ENCODE measurements at regions of chr15 and their contacts with region 1.

Region 1: DNA sequence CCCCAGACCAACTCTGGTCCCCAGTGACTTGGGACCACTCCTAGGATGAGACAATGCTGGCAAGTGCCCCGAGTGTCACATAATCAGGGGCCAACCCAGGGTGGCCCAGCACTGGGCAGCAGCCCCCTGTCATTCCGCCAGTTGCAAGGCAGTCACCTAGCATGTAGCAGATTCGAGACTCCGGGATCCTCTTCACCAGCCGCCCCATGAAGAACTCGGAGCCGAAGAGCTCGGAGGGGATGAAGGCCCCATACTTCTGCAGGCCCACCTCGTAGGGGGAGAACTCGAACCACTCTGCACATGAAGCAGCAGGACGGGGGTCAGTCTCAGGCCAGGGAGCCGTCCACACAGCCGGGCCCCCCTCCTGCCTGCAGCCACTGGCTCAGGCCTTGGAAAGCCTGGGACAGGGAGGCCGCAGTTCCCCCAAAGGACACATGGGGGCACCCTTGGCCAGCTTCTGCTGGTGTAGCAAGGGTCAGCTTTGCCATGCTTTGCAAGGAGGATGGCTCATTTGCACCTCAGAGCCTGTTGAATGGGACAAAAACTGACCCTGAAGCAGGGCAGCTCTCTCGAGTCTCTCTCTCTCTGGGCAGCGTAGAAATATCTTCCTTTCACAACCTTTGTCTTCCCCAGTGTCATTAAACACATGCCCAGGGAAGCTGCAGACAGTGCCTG is 17.0 kb upstream of the EHD4 start:
- DNase-seq: peak; percentile 91
- H3K4me3 Mint-ChIP-seq: no peak overlapping the region
- H3K27ac Mint-ChIP-seq: no peak overlapping the region
- H3K4me1 Mint-ChIP-seq: no peaks in the 10 kb centered on the region
- H3K27me3 Mint-ChIP-seq: no peaks in the 10 kb centered on the region

Region 2: DNA sequence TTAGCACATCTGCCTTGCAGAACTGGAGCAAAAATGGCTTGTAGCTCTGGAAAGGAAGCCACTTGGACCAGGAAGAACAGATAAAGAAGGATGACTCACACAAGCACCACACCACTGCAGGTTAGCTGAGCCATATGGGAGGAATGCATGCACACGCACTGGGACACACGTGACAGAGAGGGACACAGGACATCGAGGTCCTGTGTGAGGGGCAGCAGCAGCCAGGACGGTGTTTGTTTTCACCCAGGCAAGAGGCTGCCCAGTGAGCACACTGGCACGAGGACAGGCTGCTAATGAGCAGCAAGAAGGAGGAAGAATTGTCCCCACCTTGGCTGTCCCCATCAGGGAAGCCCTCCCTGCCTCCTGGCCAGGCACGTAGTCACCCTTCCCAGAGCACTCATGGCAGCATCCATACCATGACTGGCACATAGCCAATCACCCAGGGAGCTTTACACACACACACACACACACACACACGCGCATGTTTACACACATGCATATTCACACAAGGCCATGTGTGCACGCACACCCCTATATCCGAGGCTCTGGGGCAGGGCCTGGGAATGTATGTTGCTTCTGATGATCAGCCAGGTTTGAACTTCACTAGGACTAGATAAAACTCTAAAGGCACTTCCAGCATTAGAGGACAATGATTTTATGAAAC is 71.5 kb before region 1 on chr15:
- CTCF ChIA-PET with region 1: no interaction called
- POLR2A ChIA-PET with region 1: no interaction called
- intact Hi-C with region 1: no loop called
- DNase-seq: no peak
- H3K4me3 Mint-ChIP-seq: no peak overlapping the region
- H3K27ac Mint-ChIP-seq: no peak overlapping the region
- H3K4me1 Mint-ChIP-seq: peaks cover 5% of the 10 kb centered on the region
- H3K27me3 Mint-ChIP-seq: no peaks in the 10 kb centered on the region

Region 3: DNA sequence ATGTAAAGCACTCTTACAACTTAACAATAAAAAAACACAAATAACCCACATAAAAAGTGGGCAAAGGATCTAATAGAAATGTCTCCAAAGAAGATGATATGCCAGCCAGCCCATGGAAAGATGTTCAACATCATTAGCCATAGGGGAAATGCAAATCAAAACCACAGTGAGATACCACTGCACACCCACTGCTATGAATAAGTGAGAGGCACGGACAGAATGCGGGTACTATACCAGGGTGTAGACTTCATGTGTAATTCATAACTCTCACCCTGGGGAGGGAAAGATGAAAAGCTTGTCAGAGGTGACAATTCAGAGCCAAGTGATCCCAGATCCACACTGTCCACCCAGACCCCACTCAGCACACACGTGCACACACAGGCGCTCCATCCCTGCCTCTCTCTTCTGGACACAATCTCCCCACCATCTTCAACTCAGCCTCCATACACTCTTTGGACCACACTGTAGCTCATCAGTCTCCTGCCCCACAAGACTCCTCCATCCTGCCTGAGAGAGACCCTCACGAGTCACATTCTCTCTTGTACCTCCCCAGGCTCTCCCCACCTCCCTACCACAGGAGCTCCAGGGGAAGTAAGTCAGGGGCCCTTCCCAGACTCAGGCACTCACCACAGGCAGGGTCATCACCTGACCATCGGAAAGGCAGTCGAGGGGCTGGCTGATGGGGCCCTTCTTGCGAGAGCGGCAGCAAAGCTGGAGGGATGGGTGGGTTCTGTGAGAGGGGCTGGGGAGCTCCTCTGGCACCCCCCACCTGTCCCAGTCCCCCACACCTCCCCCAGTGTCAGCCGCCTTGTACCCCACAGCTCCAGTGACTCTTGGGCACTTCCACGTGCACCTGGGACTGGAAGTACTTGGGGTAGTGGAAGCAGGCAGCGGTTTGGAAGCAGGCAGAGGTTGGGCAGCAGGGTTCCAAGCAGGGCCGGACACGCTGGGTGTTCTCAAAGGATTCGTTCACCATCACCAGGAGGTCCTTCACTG is 10.2 kb after region 1 on chr15:
- CTCF ChIA-PET with region 1: interaction called, 21 read pairs
- POLR2A ChIA-PET with region 1: no interaction called
- intact Hi-C with region 1: no loop called
- DNase-seq: peak; percentile 30
- H3K4me3 Mint-ChIP-seq: no peak overlapping the region
- H3K27ac Mint-ChIP-seq: no peak overlapping the region
- H3K4me1 Mint-ChIP-seq: peaks cover 6% of the 10 kb centered on the region
- H3K27me3 Mint-ChIP-seq: peaks cover 2% of the 10 kb centered on the region

Region 4: DNA sequence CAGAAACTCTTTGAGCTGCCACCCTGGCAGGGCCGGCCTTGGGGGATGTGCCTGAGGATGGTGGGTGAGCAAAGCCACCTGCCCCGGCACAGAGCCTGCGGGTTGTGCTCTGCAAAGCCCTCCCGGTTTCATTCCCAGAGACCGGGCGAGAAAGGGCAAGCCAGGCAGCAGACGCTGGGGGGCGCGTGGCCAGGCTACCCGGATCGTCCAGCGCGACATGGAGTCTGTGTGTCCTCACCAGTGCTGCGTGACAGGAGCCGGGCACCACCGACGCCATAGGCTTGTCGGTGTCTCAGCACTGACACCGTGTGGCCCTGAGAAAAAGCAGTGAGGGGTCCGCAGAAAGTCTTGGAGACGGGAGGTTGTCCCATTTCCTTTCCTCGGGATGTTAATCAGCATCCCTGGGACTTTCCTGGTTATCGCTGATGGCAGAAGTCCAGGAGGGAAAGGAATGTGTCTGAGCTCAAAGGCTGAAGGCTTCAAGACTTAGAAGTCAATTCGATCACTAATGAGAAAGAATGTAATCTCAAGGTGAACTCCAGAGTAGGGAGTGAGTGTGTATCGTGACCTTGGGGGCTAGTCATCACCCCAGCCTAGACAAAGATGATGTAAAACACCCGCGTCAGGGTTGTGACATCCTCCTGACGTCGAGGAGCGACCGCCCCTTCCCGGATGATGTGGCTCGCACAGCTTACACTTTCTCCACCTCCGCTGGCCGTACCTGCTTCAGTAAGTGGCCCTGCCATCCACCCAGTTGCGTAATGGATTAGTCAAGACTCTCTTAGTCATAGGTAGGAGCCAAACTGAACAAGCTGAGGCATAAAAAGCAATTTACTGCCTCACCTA is 67.8 kb after region 1 on chr15:
- CTCF ChIA-PET with region 1: interaction called, 126 read pairs
- POLR2A ChIA-PET with region 1: no interaction called
- intact Hi-C with region 1: loop called (anchors 1 kb)
- DNase-seq: peak; percentile 81
- H3K4me3 Mint-ChIP-seq: peak overlapping the region; percentile 48
- H3K27ac Mint-ChIP-seq: no peak overlapping the region
- H3K4me1 Mint-ChIP-seq: peaks cover 13% of the 10 kb centered on the region
- H3K27me3 Mint-ChIP-seq: peaks cover 24% of the 10 kb centered on the region

Region 5: DNA sequence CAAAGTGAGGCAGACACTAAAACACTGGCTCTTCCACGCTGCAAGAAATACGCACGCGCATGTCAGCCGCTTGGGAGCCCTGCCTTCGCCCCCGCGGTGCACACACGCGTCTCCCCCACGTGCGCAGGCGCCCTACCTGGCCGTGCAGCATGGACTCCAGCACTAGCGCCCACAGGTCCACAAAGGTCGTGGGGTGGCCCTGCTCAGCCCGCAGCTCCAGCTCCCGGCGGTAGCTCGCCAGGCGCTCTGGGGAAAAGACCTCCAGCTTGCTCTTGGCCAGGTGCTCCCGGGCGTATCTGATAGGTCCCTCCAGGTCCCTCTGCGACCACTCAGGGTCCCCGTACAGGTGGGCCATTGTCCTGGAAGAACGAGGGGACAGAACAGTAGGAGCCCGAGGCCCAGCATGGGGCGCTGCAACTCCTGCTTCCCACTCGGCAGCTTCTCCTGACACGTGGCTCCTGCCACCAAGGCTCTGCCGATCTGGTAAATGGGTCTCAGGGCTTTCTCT is 90.1 kb after region 1 on chr15:
- CTCF ChIA-PET with region 1: interaction called, 70 read pairs
- POLR2A ChIA-PET with region 1: no interaction called
- intact Hi-C with region 1: no loop called
- DNase-seq: no peak
- H3K4me3 Mint-ChIP-seq: no peak overlapping the region
- H3K27ac Mint-ChIP-seq: no peak overlapping the region
- H3K4me1 Mint-ChIP-seq: peaks cover 5% of the 10 kb centered on the region
- H3K27me3 Mint-ChIP-seq: peaks cover 4% of the 10 kb centered on the region

Region 6: DNA sequence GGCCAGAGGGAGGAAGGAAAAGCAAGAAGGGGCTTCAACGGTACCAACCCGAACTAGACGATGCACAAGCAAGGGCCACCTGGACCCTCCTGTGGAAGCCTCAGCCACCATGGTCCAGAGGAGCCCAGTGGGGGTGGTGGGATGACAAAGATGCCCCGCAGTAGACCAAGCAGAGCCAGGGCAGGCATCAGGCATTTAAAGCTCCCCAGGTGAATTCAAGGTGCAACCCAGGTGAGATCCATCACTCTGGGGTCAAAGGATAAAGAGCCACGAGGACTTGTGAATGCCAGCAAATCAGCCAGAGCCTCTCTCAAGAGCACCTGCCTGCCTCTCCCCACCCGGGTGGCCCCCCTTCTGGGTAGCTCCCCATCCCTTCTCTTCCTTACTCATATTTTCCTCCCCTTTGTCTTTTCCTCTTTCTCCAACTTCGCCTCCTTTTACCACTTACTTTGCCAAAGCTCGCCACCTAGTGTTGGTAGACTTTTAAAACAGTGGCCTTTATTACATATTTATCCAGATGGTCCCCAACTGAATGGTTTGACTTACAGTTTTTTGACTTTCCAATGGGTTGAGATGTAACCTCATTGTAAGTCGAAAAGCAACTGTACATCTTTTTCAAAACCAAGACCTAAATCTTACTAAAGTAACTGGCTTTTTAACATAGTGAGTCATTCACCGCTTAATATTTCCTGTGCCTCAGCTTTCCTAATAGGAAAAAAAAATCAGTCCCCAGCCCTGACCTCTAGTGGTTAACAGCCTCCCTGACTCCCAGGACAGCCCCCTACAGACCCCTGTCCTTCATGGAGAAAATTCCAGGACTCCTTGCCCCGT is 148.2 kb after region 1 on chr15:
- CTCF ChIA-PET with region 1: interaction called, 27 read pairs
- POLR2A ChIA-PET with region 1: no interaction called
- intact Hi-C with region 1: loop called (anchors 2 kb)
- DNase-seq: peak; percentile 15
- H3K4me3 Mint-ChIP-seq: no peak overlapping the region
- H3K27ac Mint-ChIP-seq: no peak overlapping the region
- H3K4me1 Mint-ChIP-seq: no peaks in the 10 kb centered on the region
- H3K27me3 Mint-ChIP-seq: peaks cover 3% of the 10 kb centered on the region

Measured in activated CD4-positive, alpha-beta memory T cell treated with anti-CD3 and anti-CD28 coated beads for 36 hours (primary cell).